Mammary epithelial cell (primary cell): ENCODE measurements at regions of chr15 and their contacts with region 1.

Region 1: GRCh38 chr15:68304589-68305337 is 27.2 kb downstream of the FEM1B start:
- DNase-seq: peak; percentile 87
- H3K4me3 ChIP-seq: no peak overlapping the region
- H3K27ac ChIP-seq: peak overlapping the region; percentile 73
- H3K4me1 ChIP-seq: peaks cover 29% of the 10 kb centered on the region
- H3K27me3 ChIP-seq: no peaks in the 10 kb centered on the region
- CTCF ChIP-seq: peak in 1 of 2 donors; percentile 12

Region 2: GRCh38 chr15:67548862-67549651 is 755.7 kb before region 1 on chr15:
- CTCF ChIA-PET with region 1: no interaction called
- dilution Hi-C with region 1: no loop called
- in situ Hi-C with region 1: no loop called
- intact Hi-C with region 1: no loop called
- DNase-seq: no peak
- H3K4me3 ChIP-seq: no peak overlapping the region
- H3K27ac ChIP-seq: no peak overlapping the region
- H3K4me1 ChIP-seq: no peaks in the 10 kb centered on the region
- H3K27me3 ChIP-seq: no peaks in the 10 kb centered on the region
- CTCF ChIP-seq: no peak

Region 3: GRCh38 chr15:68252925-68253534 is 51.7 kb before region 1 on chr15:
- CTCF ChIA-PET with region 1: interaction called, 72 read pairs
- dilution Hi-C with region 1: no loop called
- in situ Hi-C with region 1: loop called in 1 of 2 experiments (anchors 10 kb)
- intact Hi-C with region 1: loop called (anchors 1 kb)
- DNase-seq: peak; percentile 76
- H3K4me3 ChIP-seq: no peak overlapping the region
- H3K27ac ChIP-seq: no peak overlapping the region
- H3K4me1 ChIP-seq: peaks cover 19% of the 10 kb centered on the region
- H3K27me3 ChIP-seq: no peaks in the 10 kb centered on the region
- CTCF ChIP-seq: peak; percentile 84 to 96

Region 4: DNA sequence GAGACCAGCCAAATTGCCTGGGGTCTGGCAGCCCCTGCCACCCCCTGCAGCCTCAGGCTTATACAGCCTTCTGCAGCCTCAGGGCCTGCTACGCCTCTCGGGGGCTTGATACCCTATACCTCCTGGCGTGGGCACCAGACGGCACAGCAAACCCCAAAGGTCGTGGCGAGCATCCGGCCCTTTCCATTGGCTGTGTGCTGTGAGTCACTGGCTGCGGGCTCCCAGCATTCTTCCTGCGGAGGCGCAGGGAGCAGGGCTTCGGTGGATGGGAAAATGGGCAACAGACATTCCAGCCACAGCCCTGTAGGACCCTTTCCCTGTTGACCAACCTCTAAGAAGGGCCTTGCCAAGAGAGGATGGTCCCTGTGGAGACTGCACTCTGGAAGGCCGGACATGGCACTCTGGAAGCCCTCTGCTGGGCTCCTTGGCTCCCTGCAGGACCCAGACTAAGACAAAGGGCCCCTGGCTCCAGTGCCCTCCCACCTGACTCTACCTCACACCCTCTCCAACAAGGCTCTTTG is 67.6 kb after region 1 on chr15:
- CTCF ChIA-PET with region 1: no interaction called
- dilution Hi-C with region 1: loop called (anchors 5 kb)
- in situ Hi-C with region 1: no loop called
- intact Hi-C with region 1: loop called (anchors 1 kb)
- DNase-seq: peak; percentile 20
- H3K4me3 ChIP-seq: no peak overlapping the region
- H3K27ac ChIP-seq: no peak overlapping the region
- H3K4me1 ChIP-seq: no peaks in the 10 kb centered on the region
- H3K27me3 ChIP-seq: no peaks in the 10 kb centered on the region
- CTCF ChIP-seq: peak; percentile 51 to 67

Region 5: GRCh38 chr15:68550481-68551295 is 245.9 kb after region 1 on chr15:
- CTCF ChIA-PET with region 1: interaction called, 7 read pairs
- dilution Hi-C with region 1: no loop called
- in situ Hi-C with region 1: loop called in 1 of 2 experiments (anchors 5 kb)
- intact Hi-C with region 1: loop called (anchors 1 kb)
- DNase-seq: peak; percentile 37
- H3K4me3 ChIP-seq: no peak overlapping the region
- H3K27ac ChIP-seq: no peak overlapping the region
- H3K4me1 ChIP-seq: no peaks in the 10 kb centered on the region
- H3K27me3 ChIP-seq: no peaks in the 10 kb centered on the region
- CTCF ChIP-seq: peak; percentile 82 to 89

Region 6: DNA sequence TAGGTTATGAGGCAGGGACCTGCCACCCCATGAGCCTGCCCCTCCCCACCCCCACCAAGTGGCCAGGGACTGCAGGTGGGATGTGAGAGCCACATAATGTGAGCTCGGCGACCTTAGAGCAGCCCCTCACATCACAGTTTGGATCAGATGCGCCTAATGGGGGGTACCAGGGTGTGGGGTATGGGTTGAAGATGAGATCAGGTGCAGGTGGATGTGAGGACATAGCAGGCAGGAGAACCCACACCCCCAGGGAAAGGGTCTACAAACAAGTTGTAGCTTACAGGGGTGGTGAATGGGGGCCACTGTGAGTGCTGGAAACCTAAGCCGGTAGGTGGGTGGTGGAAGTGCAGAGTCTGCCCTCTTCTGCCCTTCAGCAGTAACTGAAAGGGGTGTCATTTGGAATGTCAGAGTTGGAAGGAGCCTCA is 368.0 kb after region 1 on chr15:
- CTCF ChIA-PET with region 1: interaction called, 3 read pairs
- dilution Hi-C with region 1: no loop called
- in situ Hi-C with region 1: loop called in 1 of 2 experiments (anchors 25 kb)
- intact Hi-C with region 1: loop called (anchors 1 kb)
- DNase-seq: no peak
- H3K4me3 ChIP-seq: no peak overlapping the region
- H3K27ac ChIP-seq: no peak overlapping the region
- H3K4me1 ChIP-seq: peaks cover 14% of the 10 kb centered on the region
- H3K27me3 ChIP-seq: no peaks in the 10 kb centered on the region
- CTCF ChIP-seq: peak; percentile 22 to 36

Region 7: GRCh38 chr15:68924866-68925560 is 620.2 kb after region 1 on chr15:
- CTCF ChIA-PET with region 1: no interaction called
- dilution Hi-C with region 1: no loop called
- in situ Hi-C with region 1: no loop called
- intact Hi-C with region 1: loop called (anchors 5 kb)
- DNase-seq: peak; percentile 68
- H3K4me3 ChIP-seq: no peak overlapping the region
- H3K27ac ChIP-seq: no peak overlapping the region
- H3K4me1 ChIP-seq: no peaks in the 10 kb centered on the region
- H3K27me3 ChIP-seq: no peaks in the 10 kb centered on the region
- CTCF ChIP-seq: peak; percentile 92 to 97